ENCODE measurements at regions of chr18 and their contacts with region 1.

Region 1: DNA sequence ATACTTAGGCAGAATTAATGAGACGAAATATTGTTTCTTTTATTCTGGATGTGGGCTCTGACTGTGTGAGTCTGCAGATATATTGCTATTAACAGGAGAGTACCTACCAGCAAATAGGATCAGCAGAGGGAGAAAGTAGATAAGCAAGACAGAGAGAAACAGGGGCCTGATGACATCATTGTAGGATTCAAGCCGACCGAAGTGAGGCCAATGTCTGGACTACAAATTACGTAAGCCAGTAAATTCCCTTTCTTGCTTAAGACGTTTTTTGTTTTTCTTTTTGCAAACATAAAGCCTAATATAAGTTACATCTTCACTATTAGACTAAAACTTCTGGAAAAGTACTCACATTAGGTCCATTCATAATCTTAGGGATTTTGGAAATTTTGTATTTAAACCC is 21.4 kb upstream of the PTPRM start:
- DNase-seq: no peak
- H3K4me3 ChIP-seq: no peak overlapping the region
- H3K27ac ChIP-seq: no peak overlapping the region
- H3K4me1 ChIP-seq: no peaks in the 10 kb centered on the region
- H3K27me3 ChIP-seq: no peaks in the 10 kb centered on the region
- CTCF ChIP-seq: no peak

Region 2: DNA sequence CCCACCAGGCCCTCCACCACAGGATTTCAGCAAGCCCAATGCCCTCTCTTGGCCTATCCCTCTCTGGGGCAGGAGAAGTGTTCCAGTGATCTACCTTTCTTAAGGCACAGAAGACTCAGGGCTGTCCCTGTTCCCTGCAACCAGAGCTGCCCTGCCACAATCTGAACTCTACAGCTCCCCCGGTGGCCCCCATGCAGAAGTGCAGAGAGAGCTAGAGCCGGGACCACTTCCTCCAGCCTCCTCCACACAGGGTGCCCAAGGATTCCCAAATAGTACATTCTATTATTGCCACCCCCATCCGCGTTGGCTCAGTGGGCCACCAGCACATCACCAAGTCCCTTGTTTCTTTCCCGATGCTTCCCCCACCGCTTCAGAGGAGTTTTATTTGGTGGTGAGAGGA is 93.4 kb before region 1 on chr18:
- intact Hi-C with region 1: loop called (anchors 10 kb)
- DNase-seq: no peak
- H3K4me3 ChIP-seq: no peak overlapping the region
- H3K27ac ChIP-seq: no peak overlapping the region
- H3K4me1 ChIP-seq: peaks cover 11% of the 10 kb centered on the region
- H3K27me3 ChIP-seq: no peaks in the 10 kb centered on the region
- CTCF ChIP-seq: peak; percentile 77